H1 (cell line): ENCODE measurements at regions of chr19 and their contacts with region 1.

Region 1: GRCh38 chr19:4660181-4660791 is 9.9 kb downstream of the MYDGF start:
- DNase-seq: peak in 1 of 2 experiments; percentile 67
- H3K4me3 ChIP-seq: no peak overlapping the region
- H3K27ac ChIP-seq: no peak overlapping the region
- H3K4me1 ChIP-seq: no peaks in the 10 kb centered on the region
- H3K27me3 ChIP-seq: no peaks in the 10 kb centered on the region
- CTCF ChIP-seq: peak; percentile 57 to 80 (median 68)
- EP300 ChIP-seq: no peak
- POLR2A ChIP-seq: no peak
- RAD21 ChIP-seq: peak; percentile 51 to 64

Region 2: GRCh38 chr19:4589579-4590410 is 70.5 kb before region 1 on chr19:
- CTCF ChIA-PET with region 1: no interaction called
- POLR2A ChIA-PET with region 1: no interaction called
- DNase-seq: peak in 1 of 2 experiments; percentile 57
- H3K4me3 ChIP-seq: no peak overlapping the region
- H3K27ac ChIP-seq: no peak overlapping the region
- H3K4me1 ChIP-seq: no peaks in the 10 kb centered on the region; a peak in 1 of 7 replicates
- H3K27me3 ChIP-seq: peaks cover 0 to 6% (median 4%) of the 10 kb centered on the region in 4 experiments; a peak in 3 of 7 replicates
- CTCF ChIP-seq: peak; percentile 27 to 33 (median 31)
- EP300 ChIP-seq: no peak
- POLR2A ChIP-seq: no peak
- RAD21 ChIP-seq: peak; percentile 21 to 29; a peak in 2 of 4 replicates

Region 3: DNA sequence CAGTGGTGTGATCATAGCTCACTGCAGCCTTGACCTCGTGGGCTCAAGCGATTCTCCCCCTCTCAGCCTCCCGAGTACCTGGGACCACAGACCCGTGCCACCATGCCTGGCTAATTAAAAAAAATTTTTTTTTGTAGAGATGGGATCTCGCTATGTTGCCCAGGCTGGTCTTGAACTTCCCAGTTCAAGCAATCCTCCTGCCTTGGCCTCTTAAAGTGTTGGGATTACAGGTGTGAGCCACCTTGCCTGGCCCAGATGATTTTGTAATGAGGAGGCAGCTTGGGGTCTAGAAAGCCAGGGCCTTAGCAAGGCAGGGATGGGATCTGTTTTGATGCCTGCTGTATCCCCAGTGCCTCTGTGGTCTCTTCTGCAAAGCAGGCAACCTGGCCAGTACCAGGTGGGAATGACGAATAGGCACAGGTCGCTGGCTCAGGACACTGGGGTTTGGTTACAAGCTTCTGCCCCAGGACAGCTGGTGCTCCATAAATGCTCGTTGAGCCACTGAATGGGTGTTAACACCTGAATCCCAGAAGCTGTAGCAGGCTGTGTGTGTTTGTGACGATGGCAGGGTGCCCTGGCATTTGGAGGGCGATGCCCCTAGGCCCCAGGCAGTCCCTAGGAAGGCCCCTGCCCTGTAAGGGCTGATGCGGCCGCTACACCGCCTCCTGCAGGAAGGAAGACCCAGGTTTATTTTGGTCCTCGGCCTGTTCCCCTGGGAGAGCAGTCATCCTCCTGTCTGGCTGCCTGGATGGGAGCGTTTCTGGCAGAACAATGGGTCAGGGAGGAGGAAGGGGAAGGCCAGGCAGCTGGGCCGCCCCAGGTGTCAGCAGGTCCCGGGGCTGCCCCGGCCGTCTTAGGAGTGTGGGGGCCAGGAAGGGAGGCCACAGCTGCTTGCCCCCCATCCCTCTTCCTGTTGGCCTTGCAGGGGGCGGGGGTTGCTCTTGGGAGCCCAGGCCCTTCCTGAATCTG is 12.3 kb before region 1 on chr19:
- CTCF ChIA-PET with region 1: interaction called, 17 read pairs
- POLR2A ChIA-PET with region 1: interaction called, 5 read pairs
- DNase-seq: peak in 1 of 2 experiments; percentile 69
- H3K4me3 ChIP-seq: no peak overlapping the region
- H3K27ac ChIP-seq: no peak overlapping the region
- H3K4me1 ChIP-seq: no peaks in the 10 kb centered on the region; a peak in 1 of 7 replicates
- H3K27me3 ChIP-seq: no peaks in the 10 kb centered on the region
- CTCF ChIP-seq: peak; percentile 50 to 63 (median 59)
- EP300 ChIP-seq: no peak
- POLR2A ChIP-seq: no peak
- RAD21 ChIP-seq: peak in 1 of 2 experiments; percentile 33; a peak in 2 of 4 replicates

Region 4: DNA sequence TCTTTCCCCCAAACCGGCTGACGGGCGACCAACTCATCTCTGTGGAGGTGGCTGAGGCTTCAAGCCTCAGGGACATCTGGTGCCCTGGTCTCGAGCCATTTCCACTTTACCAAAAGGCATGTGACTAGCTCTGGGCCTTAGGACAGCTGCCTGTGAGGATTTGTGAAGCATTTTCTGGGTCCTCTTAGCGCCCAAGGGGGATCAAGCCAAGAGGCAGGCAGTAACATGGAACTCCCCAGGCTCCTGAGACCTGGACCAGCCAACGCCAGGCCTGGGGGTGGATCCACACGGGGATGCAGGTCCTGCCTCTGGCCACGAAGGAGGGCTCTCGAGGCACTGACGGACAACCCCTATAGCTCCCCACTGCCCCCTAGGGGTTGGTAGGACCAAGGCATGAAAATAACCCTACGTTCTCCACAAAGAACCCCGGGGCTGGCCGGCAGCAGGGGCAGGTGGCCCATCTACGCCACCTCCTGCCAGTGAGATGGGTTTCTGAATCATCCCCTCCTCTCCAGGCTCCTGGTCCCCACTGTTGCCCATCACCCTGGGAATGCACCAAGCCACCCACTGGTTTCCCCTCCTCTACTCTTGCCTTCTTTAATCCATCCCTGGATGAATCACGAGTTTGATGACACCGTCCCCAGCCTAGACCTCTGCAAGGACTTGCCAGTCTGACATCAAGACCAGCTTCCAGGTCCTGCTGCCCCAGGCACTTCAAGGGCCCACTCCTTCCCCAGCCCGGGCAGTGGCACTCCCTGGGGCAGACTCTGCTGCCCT is 16.9 kb after region 1 on chr19:
- CTCF ChIA-PET with region 1: interaction called, 11 read pairs
- POLR2A ChIA-PET with region 1: interaction called, 4 read pairs
- DNase-seq: peak; percentile 75 to 91
- H3K4me3 ChIP-seq: peak overlapping the region in 1 of 4 experiments; percentile 20; a peak in 1 of 8 replicates
- H3K27ac ChIP-seq: no peak overlapping the region
- H3K4me1 ChIP-seq: peaks cover 0 to 11% (median 8%) of the 10 kb centered on the region in 4 experiments; a peak in 6 of 7 replicates
- H3K27me3 ChIP-seq: no peaks in the 10 kb centered on the region; a peak in 1 of 7 replicates
- CTCF ChIP-seq: peak; percentile 73 to 95 (median 92)
- EP300 ChIP-seq: no peak
- POLR2A ChIP-seq: no peak
- RAD21 ChIP-seq: peak; percentile 24 to 37; a peak in 2 of 4 replicates